ENCODE measurements at regions of chr5 and their contacts with region 1.

Region 1: GRCh38 chr5:140073296-140073695 is 30.2 kb upstream of the NRG2 start:
- DNase-seq: no peak
- H3K4me3 ChIP-seq: no peak overlapping the region
- H3K27ac ChIP-seq: no peak overlapping the region
- H3K4me1 ChIP-seq: no peaks in the 10 kb centered on the region
- H3K27me3 ChIP-seq: peaks cover 2% of the 10 kb centered on the region
- CTCF ChIP-seq: peak; percentile 50 to 53

Region 2: DNA sequence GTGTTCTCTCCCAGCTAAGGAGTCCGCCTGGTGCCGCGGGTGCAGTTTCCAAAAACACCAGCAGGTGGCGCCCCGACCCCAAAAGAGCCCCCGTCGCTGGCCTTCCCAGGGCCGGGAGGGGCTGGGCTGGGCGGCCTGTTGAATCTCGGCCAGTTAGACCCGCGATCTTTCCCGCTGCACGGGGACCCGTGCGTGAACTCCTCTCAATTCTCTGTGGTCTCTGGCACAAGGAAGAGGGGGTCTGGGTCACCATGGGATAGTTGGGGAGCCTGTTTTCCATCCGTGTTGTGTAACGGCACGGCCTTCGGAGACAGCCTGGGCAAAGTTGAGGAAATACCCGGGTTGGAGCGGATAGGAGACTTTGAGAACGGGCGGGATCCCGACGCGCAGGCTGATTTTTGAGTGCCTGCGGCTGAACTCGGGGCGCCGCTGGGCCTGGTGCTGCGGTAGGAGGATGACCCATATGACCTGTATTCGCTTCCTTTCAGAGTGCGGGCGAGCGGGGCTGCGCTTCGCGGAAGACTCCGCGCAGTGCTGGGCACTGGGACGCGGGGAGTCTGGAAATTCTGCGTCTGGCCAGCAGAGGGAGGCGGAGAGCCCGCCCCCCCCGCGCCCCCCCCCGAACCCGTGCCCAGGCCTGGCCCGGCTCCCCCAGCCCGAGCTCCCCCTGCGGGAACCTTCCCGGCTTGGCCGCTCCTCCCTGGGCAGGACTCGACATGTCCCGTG is 285.6 kb before region 1 on chr5:
- CTCF ChIA-PET with region 1: interaction called, 5 read pairs
- dilution Hi-C with region 1: no loop called
- in situ Hi-C with region 1: no loop called
- intact Hi-C with region 1: loop called (anchors 5 kb)
- DNase-seq: peak; percentile 69
- H3K4me3 ChIP-seq: peak overlapping the region; percentile 50 to 79 (median 60)
- H3K27ac ChIP-seq: peak overlapping the region; percentile 34
- H3K4me1 ChIP-seq: peaks cover 8% of the 10 kb centered on the region
- H3K27me3 ChIP-seq: no peaks in the 10 kb centered on the region
- CTCF ChIP-seq: peak; percentile 65 to 95

Region 3: DNA sequence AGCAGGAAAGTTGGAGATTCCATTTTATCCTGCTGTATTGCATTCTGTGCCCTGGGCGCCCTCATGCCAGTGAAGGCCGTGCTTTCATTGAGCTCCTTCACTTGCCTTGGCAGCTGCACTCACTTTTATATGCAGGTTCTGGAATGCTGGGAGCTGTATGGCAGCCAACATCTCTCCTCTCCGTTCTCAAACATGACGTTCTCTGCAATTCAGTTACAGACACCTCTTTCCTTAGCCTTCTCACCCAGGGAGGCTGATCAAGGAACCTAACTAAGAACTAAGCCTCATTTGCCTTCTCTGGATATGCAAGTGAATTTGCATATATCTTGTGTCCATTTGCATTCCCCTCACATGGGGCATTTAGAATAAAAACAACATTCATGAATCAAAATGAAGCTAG is 11.2 kb after region 1 on chr5:
- CTCF ChIA-PET with region 1: no interaction called
- dilution Hi-C with region 1: no loop called
- in situ Hi-C with region 1: no loop called
- intact Hi-C with region 1: no loop called
- DNase-seq: no peak
- H3K4me3 ChIP-seq: no peak overlapping the region
- H3K27ac ChIP-seq: no peak overlapping the region
- H3K4me1 ChIP-seq: no peaks in the 10 kb centered on the region
- H3K27me3 ChIP-seq: peaks cover 5% of the 10 kb centered on the region
- CTCF ChIP-seq: no peak

Region 4: GRCh38 chr5:140107312-140108083 is 34.2 kb after region 1 on chr5:
- CTCF ChIA-PET with region 1: no interaction called
- dilution Hi-C with region 1: no loop called
- in situ Hi-C with region 1: no loop called
- intact Hi-C with region 1: loop called (anchors 2 kb)
- DNase-seq: peak; percentile 92
- H3K4me3 ChIP-seq: peak overlapping the region; percentile 83 to 97 (median 88)
- H3K27ac ChIP-seq: peak overlapping the region; percentile 85
- H3K4me1 ChIP-seq: peaks cover 13% of the 10 kb centered on the region
- H3K27me3 ChIP-seq: no peaks in the 10 kb centered on the region
- CTCF ChIP-seq: peak in 1 of 2 donors; percentile 26

Region 5: GRCh38 chr5:140157032-140157803 is 83.9 kb after region 1 on chr5:
- CTCF ChIA-PET with region 1: no interaction called
- dilution Hi-C with region 1: no loop called
- in situ Hi-C with region 1: loop called in 1 of 2 experiments (anchors 5 kb)
- intact Hi-C with region 1: loop called (anchors 1 kb)
- DNase-seq: peak; percentile 66
- H3K4me3 ChIP-seq: peak overlapping the region in 2 of 3 experiments; percentile 23 to 41
- H3K27ac ChIP-seq: peak overlapping the region; percentile 9
- H3K4me1 ChIP-seq: peaks cover 8% of the 10 kb centered on the region
- H3K27me3 ChIP-seq: no peaks in the 10 kb centered on the region
- CTCF ChIP-seq: peak; percentile 73 to 90

Region 6: DNA sequence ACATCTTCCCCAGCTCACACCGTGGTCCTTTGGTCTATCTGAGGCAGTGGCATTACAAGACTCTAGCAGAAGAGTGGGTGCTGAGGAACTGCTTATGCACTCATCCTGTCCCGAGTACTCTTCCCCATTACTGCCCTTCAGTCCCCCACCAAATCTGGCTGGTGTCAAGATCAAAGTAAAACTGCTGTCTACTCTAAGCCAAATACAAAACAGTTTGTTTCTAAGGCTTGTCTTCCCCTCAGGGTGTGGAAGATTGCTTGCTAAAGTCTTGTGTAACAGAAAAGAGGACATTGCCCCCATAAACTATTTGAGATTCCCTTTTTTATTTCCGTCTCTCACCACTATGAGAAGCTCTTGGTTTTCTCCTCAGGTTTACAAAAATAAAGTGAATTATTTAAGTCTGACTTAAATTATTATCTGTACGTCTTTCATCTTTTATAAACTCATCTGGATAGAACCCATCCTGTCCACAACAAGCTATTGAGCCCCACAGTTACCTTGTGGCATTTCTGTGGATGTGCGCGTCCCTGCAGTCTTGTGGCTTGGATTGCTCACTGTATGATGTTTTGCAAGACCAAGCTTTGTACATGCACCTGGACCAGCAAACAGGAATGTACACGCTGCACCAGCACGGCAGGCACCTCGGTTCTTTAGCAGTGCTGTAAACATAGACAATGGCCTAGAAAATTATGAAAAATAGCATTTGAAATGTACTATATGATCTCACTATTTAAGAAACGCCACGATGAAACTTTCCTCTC is 162.7 kb after region 1 on chr5:
- CTCF ChIA-PET with region 1: no interaction called
- dilution Hi-C with region 1: no loop called
- in situ Hi-C with region 1: no loop called
- intact Hi-C with region 1: loop called (anchors 2 kb)
- DNase-seq: peak; percentile 82
- H3K4me3 ChIP-seq: no peak overlapping the region
- H3K27ac ChIP-seq: no peak overlapping the region
- H3K4me1 ChIP-seq: peaks cover 37% of the 10 kb centered on the region
- H3K27me3 ChIP-seq: no peaks in the 10 kb centered on the region
- CTCF ChIP-seq: no peak

Region 7: GRCh38 chr5:140357726-140358093 is 284.4 kb after region 1 on chr5:
- CTCF ChIA-PET with region 1: no interaction called
- dilution Hi-C with region 1: no loop called
- in situ Hi-C with region 1: loop called in 1 of 2 experiments (anchors 25 kb)
- intact Hi-C with region 1: loop called (anchors 2 kb)
- DNase-seq: peak; percentile 77
- H3K4me3 ChIP-seq: no peak overlapping the region
- H3K27ac ChIP-seq: peak overlapping the region; percentile 4
- H3K4me1 ChIP-seq: peaks cover 4% of the 10 kb centered on the region
- H3K27me3 ChIP-seq: no peaks in the 10 kb centered on the region
- CTCF ChIP-seq: peak; percentile 81 to 93